GM12878 (cell line): ENCODE measurements at regions of chr9 and their contacts with region 1.

Region 1: DNA sequence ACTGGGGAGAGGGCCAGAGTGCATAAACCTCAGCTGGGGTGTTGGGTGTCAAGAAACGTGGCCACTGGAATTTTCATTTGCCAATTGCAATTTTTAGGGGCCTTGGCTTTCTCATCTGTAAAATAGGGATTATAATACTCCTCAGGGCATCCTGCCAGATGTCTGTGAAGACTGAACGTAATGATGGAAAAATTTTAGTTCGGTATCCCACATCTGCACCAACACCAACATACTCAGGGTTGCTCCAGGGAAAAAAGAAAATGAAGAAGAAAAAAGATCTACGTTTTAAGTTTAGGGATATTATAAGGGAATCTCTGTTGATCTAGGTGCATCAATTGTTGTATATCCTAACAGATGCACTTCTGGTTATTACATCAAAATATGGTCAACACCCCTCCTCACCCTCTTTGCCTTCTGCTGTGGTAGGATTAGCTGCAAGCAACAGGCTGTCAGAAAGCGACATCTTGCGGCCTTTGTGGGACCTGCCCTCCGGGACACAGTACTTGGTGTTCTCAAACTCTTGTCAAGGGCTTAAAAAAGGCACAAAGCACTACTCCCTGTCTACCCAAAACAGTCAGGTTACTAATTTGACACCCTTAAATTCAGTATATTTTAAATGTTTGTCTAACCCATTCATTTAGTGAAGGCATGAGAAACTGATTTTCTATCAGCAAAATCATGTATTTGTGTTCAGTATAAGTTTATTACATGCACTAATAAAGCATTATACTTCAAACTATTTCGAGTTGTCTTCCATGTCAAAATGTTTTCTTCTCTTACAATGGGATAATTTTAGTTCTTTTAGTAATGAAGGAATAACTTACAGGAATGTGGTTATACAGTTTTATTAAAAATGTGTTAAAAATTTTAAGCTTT is 8.3 kb upstream of the TBC1D2 start:
- DNase-seq: peak; percentile 40
- ATAC-seq: peak; percentile 100
- H3K4me3 ChIP-seq: no peak overlapping the region
- H3K27ac ChIP-seq: no peak overlapping the region
- H3K4me1 ChIP-seq: no peaks in the 10 kb centered on the region
- H3K27me3 ChIP-seq: no peaks in the 10 kb centered on the region
- CTCF ChIP-seq: peak; percentile 91 to 95 (median 93)
- EP300 ChIP-seq: no peak
- POLR2A ChIP-seq: no peak
- RAD21 ChIP-seq: peak; percentile 99

Region 2: GRCh38 chr9:97675655-97676054 is 588.1 kb before region 1 on chr9:
- CTCF ChIA-PET with region 1: no interaction called
- POLR2A ChIA-PET with region 1: no interaction called
- RAD21 ChIA-PET with region 1: no interaction called
- SMC1A ChIA-PET with region 1: no interaction called
- in situ Hi-C with region 1: no loop called
- intact Hi-C with region 1: no loop called
- DNase-seq: no peak
- ATAC-seq: peak; percentile 81
- H3K4me3 ChIP-seq: no peak overlapping the region
- H3K27ac ChIP-seq: no peak overlapping the region
- H3K4me1 ChIP-seq: peaks cover 3% of the 10 kb centered on the region; the same call in 1 of the 2 replicates
- H3K27me3 ChIP-seq: no peaks in the 10 kb centered on the region
- CTCF ChIP-seq: no peak
- EP300 ChIP-seq: no peak
- POLR2A ChIP-seq: no peak
- RAD21 ChIP-seq: no peak

Region 3: GRCh38 chr9:97710356-97711222 is 553.1 kb before region 1 on chr9:
- CTCF ChIA-PET with region 1: interaction called, 4 read pairs
- POLR2A ChIA-PET with region 1: no interaction called
- RAD21 ChIA-PET with region 1: no interaction called
- SMC1A ChIA-PET with region 1: interaction called, 3 read pairs
- in situ Hi-C with region 1: no loop called
- intact Hi-C with region 1: loop called (anchors 10 kb)
- DNase-seq: no peak
- ATAC-seq: peak; percentile 96
- H3K4me3 ChIP-seq: no peak overlapping the region
- H3K27ac ChIP-seq: no peak overlapping the region
- H3K4me1 ChIP-seq: peaks cover 5% of the 10 kb centered on the region
- H3K27me3 ChIP-seq: peaks cover 1 to 2% of the 10 kb centered on the region in 2 experiments; a peak in 1 of 4 replicates
- CTCF ChIP-seq: peak; percentile 72 to 85 (median 85)
- EP300 ChIP-seq: no peak
- POLR2A ChIP-seq: no peak
- RAD21 ChIP-seq: peak; percentile 85

Region 4: DNA sequence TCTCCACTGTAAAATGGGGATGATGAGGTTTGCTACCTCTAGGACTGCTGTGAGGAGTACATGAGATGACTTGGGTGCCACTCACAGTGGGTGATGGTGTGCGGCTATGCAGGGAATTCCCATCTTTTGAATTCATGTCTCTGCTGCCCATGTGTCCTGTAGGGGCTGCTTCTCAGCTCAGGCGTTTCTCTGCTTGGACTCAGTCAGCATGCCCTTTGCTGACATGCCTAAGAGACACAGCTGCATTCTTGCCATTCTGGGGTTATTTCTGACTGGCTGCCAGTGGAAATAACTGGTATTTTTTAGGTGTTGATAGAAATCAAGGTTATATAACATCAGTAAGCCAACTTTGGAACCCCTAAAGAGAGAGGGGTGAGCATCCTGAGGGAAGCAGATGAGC is 542.3 kb before region 1 on chr9:
- CTCF ChIA-PET with region 1: no interaction called
- POLR2A ChIA-PET with region 1: no interaction called
- RAD21 ChIA-PET with region 1: no interaction called
- SMC1A ChIA-PET with region 1: no interaction called
- in situ Hi-C with region 1: loop called (anchors 10 kb)
- intact Hi-C with region 1: loop called (anchors 10 kb)
- DNase-seq: no peak
- ATAC-seq: no peak
- H3K4me3 ChIP-seq: no peak overlapping the region
- H3K27ac ChIP-seq: no peak overlapping the region
- H3K4me1 ChIP-seq: no peaks in the 10 kb centered on the region
- H3K27me3 ChIP-seq: peaks cover 0 to 6% of the 10 kb centered on the region in 2 experiments; a peak in 3 of 4 replicates
- CTCF ChIP-seq: no peak
- EP300 ChIP-seq: no peak
- POLR2A ChIP-seq: no peak
- RAD21 ChIP-seq: no peak

Region 5: DNA sequence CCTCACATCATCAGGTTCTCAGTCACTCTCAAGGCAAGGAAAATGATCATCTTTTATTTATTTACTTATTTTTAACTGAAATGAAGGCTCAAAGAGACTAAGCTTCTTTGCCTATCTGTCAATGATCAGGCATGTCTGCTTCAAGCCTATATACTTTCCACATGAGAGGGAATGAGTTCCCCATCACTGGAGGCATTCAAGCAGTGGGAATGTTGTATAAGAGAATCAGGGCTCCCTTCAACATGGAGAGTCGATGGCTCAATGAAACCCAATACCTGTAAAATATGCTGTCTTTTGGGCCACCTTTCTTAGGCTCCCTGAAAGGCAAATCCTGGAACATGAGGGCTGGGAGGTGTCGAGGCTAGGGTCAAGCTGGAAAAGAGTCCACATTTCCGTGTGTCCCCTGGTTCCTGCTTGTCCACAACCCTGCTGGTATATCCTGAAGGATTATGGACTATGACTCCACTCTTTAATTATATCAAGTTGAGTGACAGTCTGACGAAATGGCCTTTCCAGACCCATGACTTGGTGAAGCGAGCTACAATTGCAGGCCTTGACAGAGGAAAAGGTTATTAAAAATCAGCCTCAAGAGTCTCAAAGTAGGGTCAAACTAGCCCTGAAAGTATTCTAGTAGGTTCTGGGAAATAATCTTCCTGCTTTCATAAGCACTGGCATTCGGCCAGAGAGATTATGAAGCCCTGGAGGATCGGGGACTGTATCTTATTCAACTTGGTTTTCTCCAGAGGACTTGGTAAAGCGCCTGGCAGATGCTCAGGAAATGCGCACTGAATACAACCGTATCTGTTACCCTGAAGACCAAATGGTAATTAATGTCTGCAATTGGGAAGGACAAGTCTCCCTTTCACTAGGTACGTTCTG is 137.7 kb after region 1 on chr9:
- CTCF ChIA-PET with region 1: no interaction called
- POLR2A ChIA-PET with region 1: no interaction called
- RAD21 ChIA-PET with region 1: no interaction called
- SMC1A ChIA-PET with region 1: no interaction called
- in situ Hi-C with region 1: no loop called
- intact Hi-C with region 1: no loop called
- DNase-seq: no peak
- ATAC-seq: no peak
- H3K4me3 ChIP-seq: no peak overlapping the region
- H3K27ac ChIP-seq: no peak overlapping the region
- H3K4me1 ChIP-seq: no peaks in the 10 kb centered on the region
- H3K27me3 ChIP-seq: no peaks in the 10 kb centered on the region
- CTCF ChIP-seq: no peak
- EP300 ChIP-seq: no peak
- POLR2A ChIP-seq: no peak
- RAD21 ChIP-seq: no peak